ENCODE measurements at regions of chr1 and their contacts with region 1.

Region 1: GRCh38 chr1:8712413-8713231 is 104.8 kb downstream of the RERE start:
- DNase-seq: no peak
- H3K4me3 ChIP-seq: no peak overlapping the region
- H3K27ac ChIP-seq: peak overlapping the region; percentile 78
- H3K4me1 ChIP-seq: no peaks in the 10 kb centered on the region
- H3K27me3 ChIP-seq: no peaks in the 10 kb centered on the region
- CTCF ChIP-seq: no peak

Region 2: DNA sequence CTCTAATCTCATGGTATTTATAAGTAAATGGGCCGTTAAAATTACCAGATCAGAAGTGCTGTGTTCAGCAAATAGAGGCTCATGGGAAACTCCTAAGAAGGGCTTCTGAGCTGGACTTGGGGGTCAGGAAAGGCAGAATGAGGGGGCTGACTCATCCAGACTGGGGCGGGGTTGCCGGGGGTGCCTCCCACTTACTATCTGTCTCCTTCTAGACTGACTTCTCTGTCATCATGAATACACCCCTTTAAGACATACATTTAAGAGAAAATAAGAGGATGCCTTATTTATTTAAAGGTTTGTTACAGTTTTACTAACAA is 590.5 kb before region 1 on chr1:
- intact Hi-C with region 1: no loop called
- DNase-seq: no peak
- H3K4me3 ChIP-seq: no peak overlapping the region
- H3K27ac ChIP-seq: peak overlapping the region; percentile 59
- H3K4me1 ChIP-seq: peaks cover 7% of the 10 kb centered on the region
- H3K27me3 ChIP-seq: no peaks in the 10 kb centered on the region
- CTCF ChIP-seq: no peak

Region 3: GRCh38 chr1:8848663-8849386 is 136.2 kb after region 1 on chr1:
- intact Hi-C with region 1: loop called (anchors 10 kb)
- DNase-seq: peak; percentile 93
- H3K4me3 ChIP-seq: no peak overlapping the region
- H3K27ac ChIP-seq: no peak overlapping the region
- H3K4me1 ChIP-seq: no peaks in the 10 kb centered on the region
- H3K27me3 ChIP-seq: no peaks in the 10 kb centered on the region
- CTCF ChIP-seq: peak; percentile 94

Measured in colonic mucosa (tissue), 4 donors.